CD8-positive, alpha-beta T cell (primary cell): ENCODE measurements at regions of chr6 and their contacts with region 1.

Region 1: DNA sequence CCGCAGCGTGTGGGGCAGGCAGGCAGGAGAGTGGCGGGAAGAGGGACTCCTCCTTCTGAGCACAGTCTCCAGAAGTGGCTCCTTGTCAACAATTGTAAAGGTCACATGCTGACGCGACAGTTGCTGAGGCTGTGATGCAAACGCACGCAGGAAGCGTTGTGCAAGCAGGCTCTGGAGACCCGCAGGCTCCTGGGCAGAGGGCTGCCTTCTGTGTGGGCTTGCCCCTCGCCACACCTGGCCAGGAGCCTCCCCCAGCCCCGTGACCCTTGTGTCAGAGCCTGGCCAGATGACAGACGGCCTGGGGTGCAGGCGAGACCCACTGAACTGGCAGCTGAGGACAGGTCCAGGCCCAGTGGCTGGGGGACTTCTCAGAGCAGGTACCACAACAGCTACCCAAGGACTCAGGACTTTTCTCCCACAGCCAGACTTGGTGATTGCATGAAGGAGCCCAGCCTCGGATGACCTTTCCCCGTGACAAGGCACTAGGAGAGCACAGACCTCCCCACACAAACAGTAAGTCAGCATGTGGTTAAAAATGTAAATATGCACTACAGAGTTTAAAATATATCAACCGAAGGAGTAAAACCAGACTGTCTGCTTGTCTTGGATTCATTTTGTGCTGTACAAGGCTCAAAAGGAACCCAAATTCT is 222.1 kb upstream of the RREB1 start:
- DNase-seq: peak in 1 of 9 experiments; percentile 27
- ATAC-seq: no peak
- H3K4me3 ChIP-seq: no peak overlapping the region
- H3K4me3 Mint-ChIP-seq: no peak overlapping the region
- H3K27ac ChIP-seq: no peak overlapping the region
- H3K27ac Mint-ChIP-seq: no peak overlapping the region
- H3K4me1 ChIP-seq: no peaks in the 10 kb centered on the region
- H3K4me1 Mint-ChIP-seq: no peaks in the 10 kb centered on the region
- H3K27me3 ChIP-seq: no peaks in the 10 kb centered on the region
- H3K27me3 Mint-ChIP-seq: no peaks in the 10 kb centered on the region
- CTCF ChIP-seq: no peak

Region 2: DNA sequence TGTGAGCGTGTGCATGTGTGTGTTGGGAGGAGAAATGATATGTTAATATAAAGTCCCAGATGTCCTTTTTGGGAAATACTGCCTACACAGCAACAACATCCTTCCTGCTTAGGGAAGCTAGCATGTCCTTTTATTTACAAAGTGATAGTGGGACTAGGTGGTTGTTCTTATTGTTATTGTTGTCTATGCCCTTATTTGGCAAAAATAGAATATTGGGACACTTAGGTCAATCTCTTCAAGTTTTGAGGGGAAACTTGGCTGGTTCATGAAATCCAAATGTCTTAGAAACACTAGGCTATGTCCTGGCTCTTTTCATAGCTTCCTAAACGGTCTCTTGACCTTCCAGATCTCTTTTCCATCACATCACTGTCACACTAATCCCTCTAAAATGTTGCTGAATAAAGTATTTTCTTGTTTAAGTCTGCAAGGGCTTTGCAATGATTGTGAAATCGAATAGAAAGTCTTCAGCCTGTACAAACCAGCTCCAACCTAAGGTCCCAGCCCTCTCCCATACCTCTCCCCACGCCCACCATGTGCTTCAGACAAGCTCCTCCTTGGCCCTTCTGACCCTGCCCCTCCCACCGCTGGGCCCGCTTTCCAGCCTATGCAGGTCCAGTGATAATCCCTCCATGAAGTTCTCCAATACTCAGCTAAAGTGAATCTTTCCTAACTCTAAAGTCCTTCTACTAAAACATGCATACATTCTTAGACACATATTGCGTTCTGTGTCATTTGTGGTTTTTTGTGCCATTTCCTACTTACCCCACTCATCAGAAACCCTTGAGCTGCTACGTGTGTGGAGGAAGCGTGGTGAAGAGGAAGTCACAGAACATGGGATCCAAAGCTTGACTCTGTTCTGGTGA is 92.0 kb before region 1 on chr6:
- CTCF ChIA-PET with region 1: no interaction called
- POLR2A ChIA-PET with region 1: no interaction called
- intact Hi-C with region 1: no loop called
- DNase-seq: peak in 1 of 9 experiments; percentile 20
- ATAC-seq: no peak
- H3K4me3 ChIP-seq: no peak overlapping the region
- H3K4me3 Mint-ChIP-seq: no peak overlapping the region
- H3K27ac ChIP-seq: no peak overlapping the region
- H3K27ac Mint-ChIP-seq: no peak overlapping the region
- H3K4me1 ChIP-seq: no peaks in the 10 kb centered on the region
- H3K4me1 Mint-ChIP-seq: peaks cover 5% of the 10 kb centered on the region
- H3K27me3 ChIP-seq: no peaks in the 10 kb centered on the region
- H3K27me3 Mint-ChIP-seq: no peaks in the 10 kb centered on the region
- CTCF ChIP-seq: no peak

Region 3: GRCh38 chr6:6872459-6873356 is 12.9 kb before region 1 on chr6:
- CTCF ChIA-PET with region 1: no interaction called
- POLR2A ChIA-PET with region 1: no interaction called
- intact Hi-C with region 1: no loop called
- DNase-seq: no peak
- ATAC-seq: no peak
- H3K4me3 ChIP-seq: no peak overlapping the region
- H3K4me3 Mint-ChIP-seq: no peak overlapping the region
- H3K27ac ChIP-seq: no peak overlapping the region
- H3K27ac Mint-ChIP-seq: no peak overlapping the region
- H3K4me1 ChIP-seq: no peaks in the 10 kb centered on the region
- H3K4me1 Mint-ChIP-seq: no peaks in the 10 kb centered on the region
- H3K27me3 ChIP-seq: no peaks in the 10 kb centered on the region
- H3K27me3 Mint-ChIP-seq: no peaks in the 10 kb centered on the region
- CTCF ChIP-seq: no peak

Region 4: DNA sequence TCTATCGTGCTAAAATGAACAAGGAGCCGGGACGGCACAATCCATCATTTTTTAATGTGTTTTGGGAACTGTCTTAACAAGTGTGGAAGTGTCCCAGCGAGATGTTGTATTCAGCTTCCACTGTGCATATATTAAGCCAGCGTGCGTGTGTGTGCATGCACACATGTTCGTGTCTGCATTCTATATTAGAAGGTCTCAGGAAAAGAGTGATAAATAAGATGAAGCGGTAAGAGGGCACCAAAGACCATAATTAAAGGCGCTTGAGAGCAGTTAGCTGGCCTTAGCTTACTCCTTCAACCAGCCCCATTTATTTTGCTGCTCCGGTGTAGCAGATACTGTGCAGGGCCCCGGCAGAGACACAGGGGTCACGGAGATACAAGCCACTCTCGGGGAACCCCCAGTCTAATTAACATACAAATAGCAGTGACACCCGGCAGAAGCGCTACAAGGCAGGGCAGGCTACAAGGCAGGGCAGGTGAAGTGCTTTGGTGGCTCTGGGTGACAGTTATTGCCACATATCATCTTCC is 15.6 kb after region 1 on chr6:
- CTCF ChIA-PET with region 1: no interaction called
- POLR2A ChIA-PET with region 1: no interaction called
- intact Hi-C with region 1: loop called in 1 of 2 experiments (anchors 1 kb)
- DNase-seq: no peak
- ATAC-seq: no peak
- H3K4me3 ChIP-seq: no peak overlapping the region
- H3K4me3 Mint-ChIP-seq: no peak overlapping the region
- H3K27ac ChIP-seq: no peak overlapping the region
- H3K27ac Mint-ChIP-seq: no peak overlapping the region
- H3K4me1 ChIP-seq: no peaks in the 10 kb centered on the region
- H3K4me1 Mint-ChIP-seq: no peaks in the 10 kb centered on the region
- H3K27me3 ChIP-seq: no peaks in the 10 kb centered on the region
- H3K27me3 Mint-ChIP-seq: no peaks in the 10 kb centered on the region
- CTCF ChIP-seq: no peak